ENCODE measurements at regions of chr22 and their contacts with region 1.

Region 1: DNA sequence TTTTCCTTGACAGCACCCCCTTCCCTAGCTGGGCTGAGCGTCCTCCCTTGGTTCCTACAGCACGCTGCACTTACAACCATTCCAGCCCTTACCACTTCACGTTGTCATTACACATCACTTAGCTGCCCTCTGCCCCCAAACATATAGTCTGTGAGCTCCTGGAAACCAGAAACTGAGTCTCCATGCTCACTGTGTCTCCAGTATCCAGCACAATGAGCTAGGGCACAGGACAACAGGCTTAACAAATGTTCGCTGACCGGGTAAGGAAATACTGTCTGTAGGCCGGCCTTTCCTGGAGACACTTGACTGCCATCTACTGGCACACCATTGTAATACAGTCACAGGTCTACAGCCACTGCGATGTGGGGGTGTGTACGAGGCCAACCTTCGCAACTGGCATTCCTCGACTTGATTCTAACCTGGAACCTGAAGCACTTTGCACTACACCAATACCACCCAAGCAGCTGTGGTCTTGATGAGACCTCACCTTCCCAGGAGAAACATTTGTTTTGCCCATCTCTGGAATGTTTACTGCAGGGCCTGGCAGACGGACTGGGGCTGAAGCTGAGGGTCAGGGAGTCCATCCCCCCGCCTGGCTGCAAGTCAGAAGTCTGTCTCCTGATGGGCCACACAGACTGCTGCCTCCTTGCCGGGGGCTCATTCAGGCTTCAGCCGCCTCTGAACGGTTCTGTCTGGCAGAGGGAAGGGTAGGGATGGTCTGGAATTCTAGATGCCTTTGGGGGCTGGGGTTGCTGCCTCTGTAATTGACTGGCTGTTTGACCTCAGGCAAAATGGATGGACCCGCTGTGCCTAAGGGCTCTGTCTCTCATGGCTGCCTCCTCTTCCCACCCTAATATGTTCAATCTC is 72.0 kb downstream of the SYN3 start:
- DNase-seq: peak in 9 of 10 donors; percentile 35 to 92 (median 63)

Region 2: GRCh38 chr22:32103658-32104315 is 882.3 kb before region 1 on chr22:
- intact Hi-C with region 1: loop called (anchors 10 kb)
- DNase-seq: no peak

Region 3: GRCh38 chr22:32528984-32529982 is 456.8 kb before region 1 on chr22:
- intact Hi-C with region 1: loop called (anchors 10 kb)
- DNase-seq: peak; percentile 76 to 98 (median 88)

Region 4: GRCh38 chr22:32660292-32660691 is 325.8 kb before region 1 on chr22:
- intact Hi-C with region 1: loop called (anchors 5 kb)
- DNase-seq: peak in 6 of 10 donors; percentile 19 to 90 (median 52)

Region 5: DNA sequence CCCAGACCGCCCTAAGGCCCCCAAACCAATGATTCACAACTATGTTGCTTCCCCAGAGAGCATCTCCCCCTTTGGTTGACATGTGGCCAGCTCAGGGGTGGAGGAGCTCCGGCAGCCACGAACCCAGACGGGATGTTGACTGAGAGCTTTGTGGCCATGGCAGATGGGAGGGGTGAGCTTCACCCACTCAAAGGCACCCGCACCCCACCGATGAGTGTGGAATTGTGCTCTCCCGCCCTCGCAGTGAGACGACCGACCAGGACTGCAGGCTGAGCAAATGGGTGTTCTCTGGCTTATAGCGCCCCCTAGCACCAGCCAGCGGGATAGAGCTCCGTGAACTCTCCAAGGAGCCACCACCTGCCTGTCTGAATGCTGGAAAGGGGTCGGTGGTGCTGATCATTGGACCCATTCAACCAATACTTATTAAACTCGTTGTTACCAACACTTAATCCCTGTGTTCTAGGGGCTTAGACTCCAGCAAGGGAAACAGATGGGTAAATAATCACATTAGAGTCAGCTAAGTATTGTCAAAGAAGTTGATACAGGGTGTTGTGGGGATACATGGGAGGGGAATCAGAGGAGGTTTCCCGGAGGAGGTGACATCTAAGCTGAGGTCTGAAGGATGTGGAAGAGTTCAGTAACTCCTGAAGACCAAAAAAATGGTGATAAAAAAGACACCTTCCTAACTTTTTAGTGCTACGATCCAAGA is 189.1 kb before region 1 on chr22:
- intact Hi-C with region 1: loop called (anchors 10 kb)
- DNase-seq: peak in 9 of 10 donors; percentile 43 to 97 (median 78)

Region 6: DNA sequence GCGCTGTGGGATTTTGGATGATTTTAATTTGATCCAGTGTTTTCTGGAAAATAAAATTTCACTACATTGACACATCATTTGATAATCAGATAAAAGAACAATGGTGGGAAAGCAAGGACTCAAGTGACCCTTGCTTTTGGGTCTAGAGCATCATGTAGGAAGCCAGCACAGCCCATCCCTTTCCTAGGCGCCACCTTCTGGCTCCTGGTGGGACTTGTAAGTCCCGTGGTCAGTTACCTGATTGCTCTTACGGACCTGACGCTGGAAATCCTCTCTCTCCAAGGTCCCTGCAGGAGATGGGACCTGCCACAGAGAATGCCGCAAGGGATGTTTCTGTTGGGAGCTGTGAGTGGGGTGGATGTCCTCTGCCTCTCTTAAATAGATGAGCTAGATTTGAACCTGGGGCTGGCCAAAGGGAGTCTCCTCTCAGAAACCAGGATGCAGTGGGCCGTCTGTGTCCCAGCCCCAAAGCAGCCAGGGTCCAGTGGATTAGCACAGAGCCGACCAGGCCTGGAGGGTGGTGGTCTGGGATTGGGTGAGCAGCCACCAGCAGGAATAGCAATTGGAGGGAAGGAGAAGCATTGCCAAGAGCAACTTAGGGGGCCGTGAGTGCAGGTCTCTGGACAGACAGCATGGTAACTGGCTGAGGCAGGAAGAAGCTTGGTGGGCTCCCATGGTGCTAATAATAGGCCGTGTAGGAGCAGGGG is 163.0 kb before region 1 on chr22:
- intact Hi-C with region 1: loop called (anchors 10 kb)
- DNase-seq: no peak

Region 7: DNA sequence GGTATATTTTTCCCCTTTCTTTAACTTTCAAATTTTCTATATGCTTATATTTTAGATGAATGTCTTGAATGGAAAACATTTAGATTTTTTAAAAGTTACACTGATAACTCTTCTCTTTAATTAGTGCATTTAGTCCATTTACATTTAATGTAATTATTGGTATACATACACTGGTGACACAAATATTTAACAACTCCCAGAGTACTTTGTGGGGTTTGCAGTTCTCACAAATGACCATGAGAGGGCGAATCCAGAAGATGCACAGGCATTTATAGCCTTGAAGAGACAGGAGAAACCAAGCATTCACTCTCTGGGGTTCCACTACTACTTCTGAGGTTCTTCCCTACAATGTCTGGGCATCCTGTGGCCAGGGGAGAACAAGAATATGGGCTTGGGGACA is 59.5 kb before region 1 on chr22:
- intact Hi-C with region 1: loop called (anchors 5 kb)
- DNase-seq: no peak

Region 8: GRCh38 chr22:32958001-32958400 is 28.1 kb before region 1 on chr22:
- intact Hi-C with region 1: no loop called
- DNase-seq: no peak

Measured in posterior cingulate gyrus (tissue), 11 donors.